Activated CD4-positive, alpha-beta T cell treated with anti-CD3 and anti-CD28 coated beads, Interleukin-2, amount 10 ng/mL, durations not matched to agents 24 days and 14 days (primary cell): ENCODE measurements at regions of chr6 and their contacts with region 1.

Region 1: DNA sequence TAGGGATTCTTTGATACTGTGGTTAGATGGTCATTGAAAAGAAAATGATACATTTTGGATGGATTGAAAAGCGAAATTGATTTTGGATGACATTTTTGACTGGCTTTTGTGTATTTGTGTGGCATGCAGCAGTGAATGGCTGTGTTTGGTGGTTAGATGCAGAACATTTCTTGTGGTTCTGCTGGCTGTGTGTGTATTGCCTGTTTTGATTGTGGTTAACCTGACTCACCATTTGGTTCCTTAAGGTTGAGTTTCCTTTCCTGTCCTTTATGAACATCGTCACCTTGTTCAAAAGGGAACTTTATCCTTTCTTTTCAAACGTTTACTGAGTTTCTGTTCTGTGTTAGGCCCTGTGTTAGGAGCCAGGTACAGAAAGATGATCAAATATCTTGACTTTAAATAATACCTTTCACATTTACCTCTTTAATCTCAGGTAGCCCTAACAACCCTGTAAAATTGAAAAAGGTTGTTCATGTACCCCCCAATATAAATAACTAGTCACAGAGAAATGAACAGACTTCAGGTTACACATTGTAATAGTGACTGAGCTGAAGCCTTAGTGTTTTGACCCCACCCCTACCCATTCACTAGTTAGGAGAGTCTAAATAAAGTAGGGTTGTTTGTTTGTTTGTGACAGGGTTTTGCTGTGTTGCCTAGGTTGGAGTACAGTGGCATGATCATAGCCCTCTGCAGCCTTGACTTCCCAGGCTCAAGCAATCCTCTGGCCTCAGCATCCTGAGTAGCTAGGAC is 23.8 kb downstream of the ANKS1A start:
- DNase-seq: peak; percentile 85
- H3K4me3 Mint-ChIP-seq: peak overlapping the region; percentile 64
- H3K27ac Mint-ChIP-seq: peak overlapping the region; percentile 87
- H3K4me1 Mint-ChIP-seq: peaks cover 35% of the 10 kb centered on the region
- H3K27me3 Mint-ChIP-seq: peaks cover 45% of the 10 kb centered on the region

Region 2: DNA sequence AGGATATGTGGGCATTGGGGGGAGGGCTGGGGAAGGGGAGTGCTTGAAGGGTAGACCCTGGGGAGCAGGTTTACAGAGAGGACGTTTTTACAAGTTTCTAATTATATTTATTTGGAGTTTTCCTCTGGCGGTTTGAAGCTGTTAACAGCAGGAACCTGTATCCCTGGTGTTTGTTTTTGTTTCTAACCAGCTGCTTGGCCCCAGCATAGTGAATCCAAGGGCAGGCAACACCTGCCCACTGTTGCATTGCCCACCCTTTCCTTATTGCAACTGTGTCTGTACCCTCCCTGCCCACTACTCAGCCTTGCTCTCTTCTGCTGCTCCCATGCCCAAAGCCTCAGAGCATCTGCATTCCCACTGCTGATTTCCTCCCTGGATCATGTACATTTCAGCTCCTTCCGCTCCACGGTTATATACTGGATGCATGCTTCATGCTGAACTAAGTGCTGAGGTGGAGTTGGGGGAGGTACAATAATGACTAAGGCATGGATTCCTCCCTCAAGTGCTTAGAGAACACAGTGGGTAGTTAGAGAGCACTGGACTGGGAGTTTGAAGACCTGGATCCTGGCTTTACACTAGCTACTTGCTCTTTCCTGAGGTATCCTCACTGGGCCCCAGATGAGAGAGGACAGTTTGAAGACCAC is 306.9 kb after region 1 on chr6:
- intact Hi-C with region 1: loop called (anchors 10 kb)
- DNase-seq: no peak
- H3K4me3 Mint-ChIP-seq: no peak overlapping the region
- H3K27ac Mint-ChIP-seq: no peak overlapping the region
- H3K4me1 Mint-ChIP-seq: no peaks in the 10 kb centered on the region
- H3K27me3 Mint-ChIP-seq: peaks cover 52% of the 10 kb centered on the region

Region 3: GRCh38 chr6:35453236-35453635 is 540.3 kb after region 1 on chr6:
- intact Hi-C with region 1: no loop called
- DNase-seq: no peak
- H3K4me3 Mint-ChIP-seq: peak overlapping the region; percentile 79
- H3K27ac Mint-ChIP-seq: no peak overlapping the region
- H3K4me1 Mint-ChIP-seq: peaks cover 35% of the 10 kb centered on the region
- H3K27me3 Mint-ChIP-seq: peaks cover 9% of the 10 kb centered on the region